ENCODE measurements at regions of chr15 and their contacts with region 1.

Region 1: GRCh38 chr15:78540141-78540928 is at the start of gene PSMA4:
- DNase-seq: peak; percentile 93
- H3K4me3 ChIP-seq: peak within 1 kb of the TSS; percentile 80
- H3K27ac ChIP-seq: peak within 1 kb of the TSS; percentile 53
- H3K4me1 ChIP-seq: peaks cover 17% of the 10 kb centered on the region
- CTCF ChIP-seq: no peak
- total RNA-seq, gene PSMA4: 186 and 189 TPM in 2 replicates

Region 2: DNA sequence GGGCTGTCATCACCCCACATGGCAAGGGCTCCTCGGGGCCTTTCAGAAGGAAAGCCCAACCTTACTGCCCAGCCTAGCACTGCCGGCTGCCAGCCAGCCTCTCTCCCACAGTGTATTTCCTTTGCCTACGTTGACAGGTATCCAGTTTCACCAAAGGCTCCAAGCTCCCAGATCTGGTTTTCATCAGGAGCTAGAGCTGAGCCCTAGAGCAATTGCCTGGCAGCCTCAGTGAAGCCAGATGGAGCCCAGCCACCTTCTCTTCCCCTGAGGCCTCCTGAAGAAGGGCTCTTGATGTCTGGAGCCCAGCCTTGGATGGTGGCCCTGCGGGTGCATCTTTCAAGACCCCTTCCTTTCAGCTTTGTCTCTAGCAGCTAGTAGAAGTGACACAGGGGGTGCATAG is 179.9 kb before region 1 on chr15:
- CTCF ChIA-PET with region 1: no interaction called
- POLR2A ChIA-PET with region 1: no interaction called
- intact Hi-C with region 1: no loop called
- DNase-seq: no peak
- H3K4me3 ChIP-seq: no peak overlapping the region
- H3K27ac ChIP-seq: no peak overlapping the region
- H3K4me1 ChIP-seq: no peaks in the 10 kb centered on the region
- CTCF ChIP-seq: no peak

Region 3: GRCh38 chr15:78565097-78565951 is 25.0 kb after region 1 on chr15 and contains the start of gene CHRNA5:
- CTCF ChIA-PET with region 1: no interaction called
- POLR2A ChIA-PET with region 1: interaction called, 17 read pairs
- intact Hi-C with region 1: loop called (anchors 2 kb)
- DNase-seq: peak; percentile 78
- H3K4me3 ChIP-seq: peak within 1 kb of the TSS; percentile 74
- H3K27ac ChIP-seq: peak within 1 kb of the TSS; percentile 22
- H3K4me1 ChIP-seq: peaks cover 19% of the 10 kb centered on the region
- CTCF ChIP-seq: no peak
- total RNA-seq, gene CHRNA5: 2.8 and 11.6 TPM in 2 replicates

Region 4: GRCh38 chr15:78895471-78895870 is 355.1 kb after region 1 on chr15:
- CTCF ChIA-PET with region 1: no interaction called
- POLR2A ChIA-PET with region 1: no interaction called
- intact Hi-C with region 1: no loop called
- DNase-seq: no peak
- H3K4me3 ChIP-seq: no peak overlapping the region
- H3K27ac ChIP-seq: no peak overlapping the region
- H3K4me1 ChIP-seq: no peaks in the 10 kb centered on the region
- CTCF ChIP-seq: no peak

Measured in OCI-LY7 (cell line).